Brain microvascular endothelial cell (primary cell): ENCODE measurements at regions of chr1 and their contacts with region 1.

Region 1: DNA sequence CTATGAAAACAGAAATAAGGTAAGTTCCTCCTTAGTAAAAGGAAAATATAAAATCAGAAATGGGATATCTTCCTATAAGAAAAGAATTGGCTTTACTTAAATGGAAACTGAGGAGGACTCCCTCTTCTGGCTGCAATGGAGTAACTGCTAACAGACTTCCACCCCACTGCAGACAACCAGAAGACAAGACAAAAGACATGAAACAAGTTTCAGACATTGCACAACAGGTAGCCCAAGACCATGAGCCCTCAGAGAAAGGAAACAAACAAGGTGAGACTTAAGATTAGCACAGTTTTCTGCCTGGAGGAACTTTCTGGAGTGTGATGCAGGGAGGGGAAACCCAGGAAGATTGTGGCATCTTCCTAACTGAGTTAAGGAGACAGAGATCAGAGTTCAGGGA is 17.0 kb upstream of the OLFML2B start:
- DNase-seq: no peak
- H3K4me3 ChIP-seq: no peak overlapping the region
- H3K27ac ChIP-seq: no peak overlapping the region
- H3K27me3 ChIP-seq: no peaks in the 10 kb centered on the region
- CTCF ChIP-seq: peak; percentile 77

Region 2: GRCh38 chr1:161201828-161202725 is 838.6 kb before region 1 on chr1 and contains the start of gene NDUFS2:
- in situ Hi-C with region 1: no loop called
- DNase-seq: peak; percentile 99
- H3K4me3 ChIP-seq: peak within 1 kb of the TSS; percentile 85
- H3K27ac ChIP-seq: peak within 1 kb of the TSS; percentile 93
- H3K27me3 ChIP-seq: no peaks in the 10 kb centered on the region
- CTCF ChIP-seq: peak; percentile 50

Region 3: GRCh38 chr1:161792740-161793139 is 247.9 kb before region 1 on chr1:
- in situ Hi-C with region 1: loop called (anchors 25 kb)
- DNase-seq: peak; percentile 70
- H3K4me3 ChIP-seq: no peak overlapping the region
- H3K27ac ChIP-seq: peak overlapping the region; percentile 42
- H3K27me3 ChIP-seq: no peaks in the 10 kb centered on the region
- CTCF ChIP-seq: peak; percentile 36

Region 4: GRCh38 chr1:161864577-161864976 is 176.1 kb before region 1 on chr1:
- in situ Hi-C with region 1: loop called (anchors 25 kb)
- DNase-seq: peak; percentile 52
- H3K4me3 ChIP-seq: no peak overlapping the region
- H3K27ac ChIP-seq: no peak overlapping the region
- H3K27me3 ChIP-seq: no peaks in the 10 kb centered on the region
- CTCF ChIP-seq: peak; percentile 72

Region 5: DNA sequence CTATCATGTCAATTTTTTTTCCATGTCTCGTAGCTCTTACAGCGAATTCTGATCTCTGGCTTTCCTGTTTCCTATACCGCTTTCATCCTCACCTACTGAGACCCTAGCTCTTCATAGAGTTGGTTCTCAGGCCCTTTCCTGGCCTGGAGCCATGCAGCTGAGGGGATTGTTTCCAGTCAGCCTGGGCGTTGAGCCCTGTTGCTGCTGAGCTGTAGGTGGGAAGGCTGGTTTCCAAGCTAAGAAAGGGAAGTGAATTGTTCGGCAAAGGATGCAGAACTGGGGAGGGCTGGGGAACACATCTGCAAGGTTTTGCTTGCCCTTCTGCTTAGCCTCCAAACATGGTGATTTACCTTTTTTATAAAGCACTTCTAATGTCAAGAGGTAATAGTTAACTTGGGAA is 294.4 kb after region 1 on chr1:
- in situ Hi-C with region 1: no loop called
- DNase-seq: no peak
- H3K4me3 ChIP-seq: no peak overlapping the region
- H3K27ac ChIP-seq: no peak overlapping the region
- H3K27me3 ChIP-seq: no peaks in the 10 kb centered on the region
- CTCF ChIP-seq: no peak

Region 6: GRCh38 chr1:162878000-162878596 is 837.4 kb after region 1 on chr1:
- in situ Hi-C with region 1: no loop called
- DNase-seq: peak; percentile 90
- H3K4me3 ChIP-seq: no peak overlapping the region
- H3K27ac ChIP-seq: peak overlapping the region; percentile 40
- H3K27me3 ChIP-seq: no peaks in the 10 kb centered on the region
- CTCF ChIP-seq: peak; percentile 86